MCF 10A (cell line): ENCODE measurements at regions of chr9 and their contacts with region 1.

Region 1: GRCh38 chr9:90914868-90915483 is 113.4 kb downstream of the SYK start:
- DNase-seq: peak; percentile 85
- H3K4me3 Mint-ChIP-seq: no peak overlapping the region
- H3K27ac Mint-ChIP-seq: no peak overlapping the region
- H3K4me1 Mint-ChIP-seq: peaks cover 17% of the 10 kb centered on the region
- H3K27me3 Mint-ChIP-seq: no peaks in the 10 kb centered on the region
- CTCF ChIP-seq: peak; percentile 86

Region 2: GRCh38 chr9:90985631-90986030 is 70.7 kb after region 1 on chr9:
- CTCF ChIA-PET with region 1: interaction called, 26 read pairs
- POLR2A ChIA-PET with region 1: no interaction called
- intact Hi-C with region 1: loop called (anchors 5 kb)
- DNase-seq: no peak
- H3K4me3 Mint-ChIP-seq: no peak overlapping the region
- H3K27ac Mint-ChIP-seq: peak overlapping the region; percentile 89
- H3K4me1 Mint-ChIP-seq: peaks cover 38% of the 10 kb centered on the region
- H3K27me3 Mint-ChIP-seq: no peaks in the 10 kb centered on the region
- CTCF ChIP-seq: no peak

Region 3: DNA sequence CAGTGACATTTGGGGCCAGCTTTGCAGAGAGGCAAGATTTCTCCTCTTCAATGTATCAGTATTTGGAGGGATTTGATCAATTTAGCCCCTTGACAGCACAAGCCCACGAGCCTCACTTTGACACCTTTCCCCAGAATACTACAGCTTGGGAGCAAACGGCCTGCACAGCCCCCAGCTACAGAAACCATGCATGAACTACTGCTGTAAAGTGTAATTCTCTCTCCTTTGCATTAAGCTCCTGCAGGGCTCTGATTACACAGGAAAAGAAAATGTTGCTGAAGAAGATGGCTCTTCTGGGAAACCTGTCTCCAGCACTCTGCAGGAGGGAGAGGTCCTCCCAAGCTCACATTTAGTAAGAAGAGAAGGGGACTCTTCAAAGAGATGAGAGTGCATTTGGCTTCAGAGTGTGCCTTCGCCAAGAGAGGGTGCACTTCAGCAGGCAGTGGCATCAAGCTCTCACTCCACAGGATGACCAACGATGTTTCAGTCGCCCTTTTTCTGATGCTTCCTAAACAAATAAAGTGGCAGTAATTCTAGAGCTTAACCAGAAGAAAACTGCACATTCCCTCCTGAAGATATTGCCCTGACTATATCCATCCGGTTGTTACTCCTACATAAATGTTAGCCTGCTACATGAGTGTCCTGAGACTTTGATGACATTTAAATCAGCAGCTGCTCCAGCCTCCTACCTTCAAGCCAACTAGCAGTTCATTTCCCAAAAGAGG is 174.6 kb after region 1 on chr9:
- CTCF ChIA-PET with region 1: interaction called, 9 read pairs
- POLR2A ChIA-PET with region 1: no interaction called
- intact Hi-C with region 1: loop called (anchors 2 kb)
- DNase-seq: peak; percentile 67
- H3K4me3 Mint-ChIP-seq: no peak overlapping the region
- H3K27ac Mint-ChIP-seq: peak overlapping the region; percentile 12
- H3K4me1 Mint-ChIP-seq: peaks cover 21% of the 10 kb centered on the region
- H3K27me3 Mint-ChIP-seq: no peaks in the 10 kb centered on the region
- CTCF ChIP-seq: peak; percentile 51

Region 4: GRCh38 chr9:91193658-91194391 is 278.8 kb after region 1 on chr9:
- CTCF ChIA-PET with region 1: interaction called, 14 read pairs
- POLR2A ChIA-PET with region 1: interaction called, 25 read pairs
- intact Hi-C with region 1: loop called (anchors 10 kb)
- DNase-seq: peak; percentile 70
- H3K4me3 Mint-ChIP-seq: peak overlapping the region; percentile 57
- H3K27ac Mint-ChIP-seq: peak overlapping the region; percentile 81
- H3K4me1 Mint-ChIP-seq: peaks cover 36% of the 10 kb centered on the region
- H3K27me3 Mint-ChIP-seq: no peaks in the 10 kb centered on the region
- CTCF ChIP-seq: no peak

Region 5: GRCh38 chr9:91433180-91433579 is 518.2 kb after region 1 on chr9:
- CTCF ChIA-PET with region 1: interaction called, 16 read pairs
- POLR2A ChIA-PET with region 1: interaction called, 13 read pairs
- intact Hi-C with region 1: loop called (anchors 1 kb)
- DNase-seq: peak; percentile 88
- H3K4me3 Mint-ChIP-seq: no peak overlapping the region
- H3K27ac Mint-ChIP-seq: no peak overlapping the region
- H3K4me1 Mint-ChIP-seq: peaks cover 27% of the 10 kb centered on the region
- H3K27me3 Mint-ChIP-seq: no peaks in the 10 kb centered on the region
- CTCF ChIP-seq: peak; percentile 45